ENCODE measurements at regions of chr10 and their contacts with region 1.

Region 1: DNA sequence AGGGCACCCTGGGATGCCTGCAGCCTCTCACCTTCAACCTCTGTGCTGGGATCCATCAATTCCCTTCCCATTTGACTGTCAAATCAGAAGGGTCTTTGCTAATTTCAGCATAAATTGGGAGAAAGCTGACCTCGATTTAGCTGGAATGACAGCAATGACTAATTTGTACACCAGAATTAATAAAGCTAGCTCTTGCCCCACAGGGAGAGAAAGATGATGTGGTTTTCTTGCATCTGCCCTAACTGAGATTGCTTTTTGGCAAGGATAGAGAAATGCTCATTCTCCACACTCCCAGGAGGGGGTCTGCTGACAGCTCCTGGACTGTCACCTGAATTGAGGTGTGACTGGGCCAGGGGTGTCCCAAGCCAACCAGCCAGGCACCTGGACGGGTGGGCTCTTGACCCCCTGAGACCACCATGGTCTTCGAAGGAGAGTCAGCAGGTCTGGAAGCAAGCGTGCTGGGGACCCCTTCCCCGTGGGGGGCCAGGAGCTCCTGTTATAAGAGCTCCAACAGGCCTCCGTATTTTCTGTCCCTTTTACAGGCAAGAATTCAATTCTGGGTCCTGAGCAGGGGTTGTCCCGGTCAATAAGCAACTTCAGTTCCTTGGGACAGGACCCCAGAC is 42.1 kb downstream of the RBM17 start:
- DNase-seq: no peak
- ATAC-seq: no peak
- H3K4me3 ChIP-seq: no peak overlapping the region
- H3K4me3 Mint-ChIP-seq: peak overlapping the region in 1 of 10 donors; percentile 50
- H3K27ac ChIP-seq: no peak overlapping the region
- H3K27ac Mint-ChIP-seq: peak overlapping the region in 1 of 9 donors; percentile 38
- H3K4me1 ChIP-seq: peaks cover 11 to 12% of the 10 kb centered on the region in 2 donors
- H3K4me1 Mint-ChIP-seq: peaks cover 16 to 45% (median 19%) of the 10 kb centered on the region in 7 donors
- H3K27me3 ChIP-seq: no peaks in the 10 kb centered on the region
- H3K27me3 Mint-ChIP-seq: peaks cover 0 to 10% (median 6%) of the 10 kb centered on the region in 5 donors

Region 2: DNA sequence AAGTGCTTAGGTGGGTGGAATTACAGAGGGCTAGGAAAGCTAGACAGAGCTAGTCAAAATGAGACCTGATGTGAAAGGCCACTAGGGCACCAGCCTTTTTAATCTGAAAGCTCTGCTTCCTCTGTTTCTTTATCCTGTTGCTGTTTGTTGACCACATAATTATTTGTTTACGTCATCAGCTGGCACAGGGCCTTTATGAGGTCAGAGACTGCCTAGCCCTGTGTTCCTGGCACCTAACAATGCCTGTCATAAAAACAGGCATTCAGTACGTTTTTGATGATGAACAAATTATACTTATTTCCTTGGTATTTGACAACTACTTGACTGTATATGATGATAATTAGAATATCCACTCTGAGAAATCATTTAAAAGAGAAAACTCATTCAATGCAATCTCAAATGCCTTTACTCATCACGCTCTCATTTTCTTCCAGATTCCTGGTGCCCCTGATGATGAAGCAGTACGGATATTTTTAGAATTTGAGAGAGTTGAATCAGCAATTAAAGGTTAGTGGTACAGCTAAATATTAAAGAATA is 16.1 kb before region 1 on chr10:
- CTCF ChIA-PET with region 1: interaction called, 3 read pairs
- POLR2A ChIA-PET with region 1: interaction called, 3 read pairs
- intact Hi-C with region 1: loop called in 1 of 2 experiments (anchors 2 kb)
- DNase-seq: no peak
- ATAC-seq: no peak
- H3K4me3 ChIP-seq: no peak overlapping the region
- H3K4me3 Mint-ChIP-seq: no peak overlapping the region
- H3K27ac ChIP-seq: no peak overlapping the region
- H3K27ac Mint-ChIP-seq: peak overlapping the region in 3 of 9 donors; percentile 6 to 50 (median 24)
- H3K4me1 ChIP-seq: no peaks in the 10 kb centered on the region
- H3K4me1 Mint-ChIP-seq: peaks cover 0 to 25% (median 4%) of the 10 kb centered on the region in 7 donors
- H3K27me3 ChIP-seq: no peaks in the 10 kb centered on the region
- H3K27me3 Mint-ChIP-seq: no peaks in the 10 kb centered on the region

Region 3: GRCh38 chr10:6144406-6145165 is 13.6 kb after region 1 on chr10:
- CTCF ChIA-PET with region 1: interaction called, 3 read pairs
- POLR2A ChIA-PET with region 1: interaction called, 6 read pairs
- intact Hi-C with region 1: loop called in 1 of 2 experiments (anchors 1 kb)
- DNase-seq: peak; percentile 79 to 92 (median 85)
- ATAC-seq: peak; percentile 94
- H3K4me3 ChIP-seq: peak overlapping the region; percentile 92
- H3K4me3 Mint-ChIP-seq: peak overlapping the region; percentile 81 to 92 (median 87)
- H3K27ac ChIP-seq: peak overlapping the region; percentile 86
- H3K27ac Mint-ChIP-seq: peak overlapping the region; percentile 74 to 91 (median 84)
- H3K4me1 ChIP-seq: peaks cover 24 to 39% of the 10 kb centered on the region in 2 donors
- H3K4me1 Mint-ChIP-seq: peaks cover 48 to 68% (median 60%) of the 10 kb centered on the region in 7 donors
- H3K27me3 ChIP-seq: no peaks in the 10 kb centered on the region
- H3K27me3 Mint-ChIP-seq: peaks cover 0 to 1% (median 0%) of the 10 kb centered on the region in 5 donors

Region 4: GRCh38 chr10:6300106-6300783 is 169.3 kb after region 1 on chr10:
- CTCF ChIA-PET with region 1: no interaction called
- POLR2A ChIA-PET with region 1: no interaction called
- intact Hi-C with region 1: no loop called
- DNase-seq: peak in 7 of 9 donors; percentile 35 to 63 (median 51)
- ATAC-seq: peak; percentile 87
- H3K4me3 ChIP-seq: peak overlapping the region; percentile 15
- H3K4me3 Mint-ChIP-seq: peak overlapping the region; percentile 30 to 78 (median 60)
- H3K27ac ChIP-seq: no peak overlapping the region
- H3K27ac Mint-ChIP-seq: peak overlapping the region; percentile 58 to 95 (median 82)
- H3K4me1 ChIP-seq: peaks cover 7 to 12% of the 10 kb centered on the region in 2 donors
- H3K4me1 Mint-ChIP-seq: peaks cover 7 to 54% (median 27%) of the 10 kb centered on the region in 7 donors
- H3K27me3 ChIP-seq: no peaks in the 10 kb centered on the region
- H3K27me3 Mint-ChIP-seq: no peaks in the 10 kb centered on the region

Region 5: DNA sequence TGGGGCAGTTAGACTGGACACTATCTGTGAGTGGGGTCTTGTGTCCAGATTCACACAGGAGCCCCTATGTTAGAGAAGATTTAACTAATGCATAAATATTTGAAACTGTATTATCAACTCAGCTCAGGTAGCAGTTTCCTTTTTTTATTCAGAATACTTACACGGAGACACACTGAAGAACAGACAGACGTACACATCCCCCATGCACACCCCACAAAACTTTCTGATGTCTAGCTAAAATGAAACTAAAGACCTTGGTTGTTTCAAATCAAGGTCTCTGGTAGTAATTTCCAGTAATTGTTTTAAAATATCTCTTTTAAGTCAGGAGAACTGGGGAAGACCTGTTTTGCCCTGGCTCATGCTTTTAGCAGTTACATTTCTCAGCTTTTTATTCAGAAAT is 504.8 kb after region 1 on chr10:
- CTCF ChIA-PET with region 1: no interaction called
- POLR2A ChIA-PET with region 1: no interaction called
- intact Hi-C with region 1: no loop called
- DNase-seq: peak in 2 of 9 donors; percentile 18 to 23
- ATAC-seq: no peak
- H3K4me3 ChIP-seq: no peak overlapping the region
- H3K4me3 Mint-ChIP-seq: peak overlapping the region in 5 of 10 donors; percentile 28 to 53 (median 39)
- H3K27ac ChIP-seq: no peak overlapping the region
- H3K27ac Mint-ChIP-seq: peak overlapping the region in 7 of 9 donors; percentile 2 to 85 (median 49)
- H3K4me1 ChIP-seq: peaks cover 0 to 4% of the 10 kb centered on the region in 2 donors
- H3K4me1 Mint-ChIP-seq: peaks cover 12 to 41% (median 21%) of the 10 kb centered on the region in 7 donors
- H3K27me3 ChIP-seq: no peaks in the 10 kb centered on the region
- H3K27me3 Mint-ChIP-seq: peaks cover 0 to 3% (median 0%) of the 10 kb centered on the region in 5 donors

Measured in naive thymus-derived CD4-positive, alpha-beta T cell (primary cell).